Head of caudate nucleus (tissue), 42 donors: ENCODE measurements at regions of chr3 and their contacts with region 1.

Region 1: GRCh38 chr3:57227204-57227929 is at the start of gene APPL1:
- DNase-seq: peak; percentile 74 to 98 (median 95)

Region 2: GRCh38 chr3:56997675-56998074 is 229.7 kb before region 1 on chr3:
- intact Hi-C with region 1: loop called (anchors 10 kb)
- DNase-seq: no peak

Region 3: GRCh38 chr3:57094575-57094974 is 132.8 kb before region 1 on chr3:
- intact Hi-C with region 1: loop called (anchors 10 kb)
- DNase-seq: no peak